ENCODE measurements at regions of chrX and their contacts with region 1.

Region 1: DNA sequence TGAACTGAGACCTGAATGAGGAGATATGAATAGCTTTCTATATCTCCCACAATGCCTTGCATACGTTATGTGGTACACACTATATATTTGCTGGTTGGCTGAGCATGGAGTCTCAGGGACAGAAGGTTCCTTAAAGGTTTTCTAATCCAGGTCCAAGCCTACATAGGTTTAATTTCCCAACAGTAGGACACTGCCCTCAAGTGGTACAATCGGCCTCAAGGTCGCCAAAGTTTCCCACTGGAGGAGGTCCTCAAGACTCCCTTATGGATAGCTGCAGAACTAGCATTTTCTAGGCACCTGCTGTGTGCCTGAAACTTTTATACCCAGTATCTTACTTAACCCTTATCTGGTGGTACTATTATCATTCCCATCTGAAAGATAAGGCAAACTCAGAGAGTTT is 21.0 kb upstream of the EFNB1 start:
- DNase-seq: no peak
- H3K4me3 ChIP-seq: no peak overlapping the region
- H3K27ac ChIP-seq: no peak overlapping the region
- H3K4me1 ChIP-seq: no peaks in the 10 kb centered on the region
- H3K27me3 ChIP-seq: no peaks in the 10 kb centered on the region
- CTCF ChIP-seq: peak; percentile 22 to 53

Region 2: DNA sequence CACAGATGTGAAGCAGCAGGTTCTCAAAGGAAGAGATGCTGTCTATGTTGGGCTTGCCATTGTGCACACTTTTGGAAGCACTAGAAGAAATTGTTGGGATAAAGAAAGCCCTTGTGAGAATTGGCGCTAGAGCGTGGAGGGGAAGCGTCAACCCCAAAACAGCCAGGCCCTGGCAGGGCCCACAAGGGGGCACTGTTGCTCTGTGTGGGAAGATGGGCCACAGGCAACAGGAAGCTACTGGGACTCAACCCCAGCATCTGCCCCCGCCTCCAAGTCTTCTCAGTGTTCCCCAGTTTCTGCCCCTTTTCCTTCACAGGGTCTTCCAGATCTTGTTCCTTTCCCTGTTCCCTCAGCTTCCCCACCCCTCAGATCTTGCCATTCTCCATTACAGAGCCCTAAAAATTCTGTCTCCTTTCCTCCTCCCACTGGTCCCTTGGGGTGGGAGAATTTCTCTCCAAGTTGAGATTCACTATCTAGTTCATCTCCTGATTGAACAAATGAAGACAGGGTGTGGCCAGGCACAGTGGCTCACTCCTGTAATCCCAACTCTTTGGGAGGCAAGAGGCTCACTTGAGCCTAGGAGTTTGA is 74.8 kb before region 1 on chrX:
- CTCF ChIA-PET with region 1: interaction called, 6 read pairs
- dilution Hi-C with region 1: no loop called
- in situ Hi-C with region 1: no loop called
- intact Hi-C with region 1: loop called (anchors 1 kb)
- DNase-seq: peak; percentile 34
- H3K4me3 ChIP-seq: no peak overlapping the region
- H3K27ac ChIP-seq: no peak overlapping the region
- H3K4me1 ChIP-seq: no peaks in the 10 kb centered on the region
- H3K27me3 ChIP-seq: peaks cover 3% of the 10 kb centered on the region
- CTCF ChIP-seq: peak; percentile 78 to 84

Measured in mammary epithelial cell (primary cell).